ENCODE measurements at regions of chr9 and their contacts with region 1.

Region 1: DNA sequence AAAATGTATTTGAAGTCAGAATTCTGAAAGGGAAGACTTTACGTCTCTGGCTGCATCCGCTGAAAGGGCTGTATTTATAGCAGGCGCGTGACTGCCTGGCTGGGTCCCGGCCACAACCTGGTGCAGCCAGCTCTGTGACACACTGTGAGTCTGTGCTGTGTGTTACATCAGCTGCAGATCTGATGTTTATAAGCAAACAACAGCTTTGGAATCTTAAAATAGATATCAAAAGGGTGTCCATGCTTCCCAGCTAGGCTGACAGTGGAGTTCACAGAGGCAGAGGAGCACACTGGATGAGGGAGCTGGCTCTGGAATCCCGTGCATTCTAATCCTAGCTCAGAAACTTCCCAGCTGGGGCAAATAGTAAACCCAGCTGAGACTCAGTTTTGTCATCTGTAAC is 433.4 kb upstream of the BRINP1 start:
- DNase-seq: peak; percentile 76 to 92
- ATAC-seq: peak; percentile 90 to 91
- H3K4me3 ChIP-seq: peak overlapping the region in 1 of 4 donors; percentile 11
- H3K27ac ChIP-seq: peak overlapping the region; percentile 76 to 90 (median 86)
- H3K4me1 ChIP-seq: peaks cover 23 to 28% of the 10 kb centered on the region in 2 donors
- H3K27me3 ChIP-seq: no peaks in the 10 kb centered on the region
- CTCF ChIP-seq: no peak
- POLR2A ChIP-seq: peak; percentile 22 to 62

Region 2: DNA sequence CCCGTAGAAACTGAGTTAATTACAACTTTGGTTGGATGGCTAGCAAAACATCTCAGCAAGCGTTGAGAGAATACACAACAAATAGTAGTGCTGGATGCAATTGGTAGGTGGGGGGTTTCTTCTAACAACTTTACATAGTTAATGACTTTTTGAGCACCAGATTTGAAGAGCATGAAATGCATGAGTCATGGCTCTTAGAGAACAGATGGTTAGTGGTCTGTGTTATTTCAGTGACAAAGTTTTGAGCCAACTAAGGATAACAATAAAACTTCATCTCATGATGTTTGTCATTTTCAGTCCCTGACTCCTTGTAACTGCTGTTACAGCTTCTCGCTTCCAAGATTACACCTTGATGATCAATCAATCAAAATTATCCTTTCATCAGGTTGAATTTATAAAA is 34.4 kb before region 1 on chr9:
- in situ Hi-C with region 1: no loop called
- intact Hi-C with region 1: no loop called
- DNase-seq: no peak
- ATAC-seq: no peak
- H3K4me3 ChIP-seq: no peak overlapping the region
- H3K27ac ChIP-seq: no peak overlapping the region
- H3K4me1 ChIP-seq: no peaks in the 10 kb centered on the region
- H3K27me3 ChIP-seq: no peaks in the 10 kb centered on the region
- CTCF ChIP-seq: no peak
- POLR2A ChIP-seq: no peak

Region 3: GRCh38 chr9:120265791-120266190 is 463.2 kb after region 1 on chr9:
- in situ Hi-C with region 1: no loop called
- intact Hi-C with region 1: loop called (anchors 5 kb)
- DNase-seq: peak; percentile 83 to 89
- ATAC-seq: peak; percentile 98 to 99
- H3K4me3 ChIP-seq: no peak overlapping the region
- H3K27ac ChIP-seq: peak overlapping the region; percentile 64 to 80 (median 70)
- H3K4me1 ChIP-seq: peaks cover 15 to 21% of the 10 kb centered on the region in 2 donors
- H3K27me3 ChIP-seq: no peaks in the 10 kb centered on the region
- CTCF ChIP-seq: no peak
- POLR2A ChIP-seq: no peak